Activated naive CD4-positive, alpha-beta T cell treated with anti-CD3 and anti-CD28 coated beads for 36 hours (primary cell): ENCODE measurements at regions of chr1 and their contacts with region 1.

Region 1: GRCh38 chr1:204506961-204507387 is 9.2 kb upstream of the MDM4 start:
- DNase-seq: peak; percentile 95
- H3K4me3 Mint-ChIP-seq: peak overlapping the region; percentile 88
- H3K27ac Mint-ChIP-seq: peak overlapping the region; percentile 99
- H3K4me1 Mint-ChIP-seq: peaks cover 20% of the 10 kb centered on the region
- H3K27me3 Mint-ChIP-seq: peaks cover 4% of the 10 kb centered on the region

Region 2: GRCh38 chr1:203861379-203862184 is 645.4 kb before region 1 on chr1 and contains the start of gene SNRPE:
- CTCF ChIA-PET with region 1: no interaction called
- intact Hi-C with region 1: loop called (anchors 10 kb)
- DNase-seq: peak; percentile 98
- H3K4me3 Mint-ChIP-seq: peak within 1 kb of the TSS; percentile 100
- H3K27ac Mint-ChIP-seq: peak within 1 kb of the TSS; percentile 95
- H3K4me1 Mint-ChIP-seq: peaks cover 25% of the 10 kb centered on the region
- H3K27me3 Mint-ChIP-seq: no peaks in the 10 kb centered on the region
- total RNA-seq, gene SNRPE: 366 to 370 TPM

Region 3: DNA sequence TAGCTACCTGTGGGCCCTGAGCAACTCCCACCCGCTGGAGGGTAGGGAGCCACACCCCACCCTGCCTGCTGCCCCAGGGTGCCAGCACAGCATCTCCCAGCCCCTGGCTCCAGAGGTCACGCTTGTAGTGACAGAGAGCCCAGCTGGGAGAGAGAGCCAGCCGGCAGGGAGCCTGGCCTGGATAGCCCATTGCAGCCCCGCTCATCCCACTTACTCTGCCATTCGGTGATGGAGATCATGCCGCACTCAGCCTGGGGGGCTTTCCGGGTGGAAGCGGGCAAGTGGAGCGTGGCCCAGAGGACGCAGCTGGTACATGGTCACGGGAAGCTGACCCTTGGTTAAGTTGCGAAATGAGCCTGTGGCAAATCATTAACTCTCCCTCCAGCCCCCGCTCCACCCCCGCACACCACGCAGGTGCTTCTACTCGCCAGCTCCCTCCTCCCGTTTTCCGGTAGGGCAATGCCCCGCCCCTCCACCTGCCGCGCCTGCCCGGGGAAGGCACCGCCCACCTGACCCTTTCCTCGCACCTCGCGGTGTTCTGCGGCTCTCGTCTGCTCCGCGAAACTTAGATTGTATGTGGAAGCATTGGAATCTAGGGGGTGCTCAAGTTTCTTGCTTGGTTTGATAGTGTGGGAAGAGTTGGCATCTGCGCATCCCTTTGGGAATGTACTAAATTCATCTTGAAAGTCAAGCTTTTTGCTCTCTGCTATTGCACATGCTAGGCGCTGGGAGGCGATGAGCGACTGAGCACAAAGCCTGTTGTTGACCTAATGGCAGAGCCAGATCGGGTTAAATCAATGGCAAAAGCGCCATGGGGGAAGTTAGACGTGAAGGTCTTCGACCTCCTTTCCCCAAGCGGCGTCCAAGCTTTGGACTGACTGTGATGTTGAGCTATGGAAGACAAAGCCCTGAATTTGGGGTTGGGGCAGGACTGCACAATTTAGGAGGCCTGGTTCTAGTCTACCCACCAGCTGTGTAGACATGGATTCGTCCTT is 293.0 kb before region 1 on chr1 and contains the start of gene GOLT1A:
- CTCF ChIA-PET with region 1: interaction called, 3 read pairs
- intact Hi-C with region 1: loop called (anchors 1 kb)
- DNase-seq: peak; percentile 74
- H3K4me3 Mint-ChIP-seq: peak within 1 kb of the TSS; percentile 20
- H3K27ac Mint-ChIP-seq: no peak within 1 kb of the TSS
- H3K4me1 Mint-ChIP-seq: peaks cover 5% of the 10 kb centered on the region
- H3K27me3 Mint-ChIP-seq: no peaks in the 10 kb centered on the region
- total RNA-seq, gene GOLT1A: not detected

Region 4: GRCh38 chr1:204323887-204324286 is 183.1 kb before region 1 on chr1:
- CTCF ChIA-PET with region 1: no interaction called
- intact Hi-C with region 1: loop called (anchors 5 kb)
- DNase-seq: peak; percentile 88
- H3K4me3 Mint-ChIP-seq: no peak overlapping the region
- H3K27ac Mint-ChIP-seq: peak overlapping the region; percentile 59
- H3K4me1 Mint-ChIP-seq: peaks cover 22% of the 10 kb centered on the region
- H3K27me3 Mint-ChIP-seq: no peaks in the 10 kb centered on the region

Region 5: DNA sequence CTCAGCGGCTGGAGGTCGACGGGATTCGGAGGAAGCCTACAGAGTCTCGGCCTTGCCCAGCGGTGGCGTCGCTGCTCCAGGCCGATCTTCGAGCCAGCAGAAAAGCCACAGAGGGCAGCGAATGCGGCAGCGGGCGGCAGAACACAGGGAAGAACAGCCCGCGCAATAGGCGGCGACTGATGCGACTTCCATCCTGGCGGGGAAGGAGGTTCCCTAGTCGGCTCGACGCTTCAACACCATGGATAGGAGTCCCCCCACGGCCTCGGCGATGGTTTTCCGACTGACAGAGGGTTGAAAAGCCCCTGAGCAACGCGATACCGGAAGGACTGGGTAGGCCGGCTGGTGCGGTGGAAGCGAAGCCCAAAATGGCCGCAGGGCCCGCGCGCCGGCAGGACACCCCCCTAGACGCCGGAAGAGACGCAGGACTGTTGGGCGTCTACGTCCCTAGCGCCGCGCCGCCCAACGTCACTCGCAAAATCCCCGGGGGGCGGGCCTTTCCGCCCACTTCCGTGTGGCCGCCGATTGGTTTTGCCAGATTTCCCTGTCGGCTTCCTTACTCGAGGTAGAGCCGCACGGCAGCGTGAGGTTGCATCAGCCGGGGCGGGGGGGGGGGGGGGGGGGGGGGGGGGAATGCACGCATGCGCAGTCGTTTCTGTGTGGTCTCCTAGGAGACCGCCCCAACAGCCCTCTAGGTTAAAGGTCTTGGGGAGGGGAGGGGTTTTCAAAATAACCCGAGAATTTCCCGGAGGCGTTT is 95.3 kb before region 1 on chr1 and contains the start of gene PPP1R15B:
- CTCF ChIA-PET with region 1: interaction called, 13 read pairs
- intact Hi-C with region 1: loop called (anchors 1 kb)
- DNase-seq: peak; percentile 97
- H3K4me3 Mint-ChIP-seq: peak within 1 kb of the TSS; percentile 99
- H3K27ac Mint-ChIP-seq: peak within 1 kb of the TSS; percentile 99
- H3K4me1 Mint-ChIP-seq: peaks cover 8% of the 10 kb centered on the region
- H3K27me3 Mint-ChIP-seq: no peaks in the 10 kb centered on the region
- total RNA-seq, gene PPP1R15B: 63.7 to 65.6 TPM

Region 6: GRCh38 chr1:204446370-204447111 is 60.4 kb before region 1 on chr1:
- CTCF ChIA-PET with region 1: interaction called, 859 read pairs
- intact Hi-C with region 1: loop called (anchors 1 kb)
- DNase-seq: peak; percentile 88
- H3K4me3 Mint-ChIP-seq: no peak overlapping the region
- H3K27ac Mint-ChIP-seq: peak overlapping the region; percentile 77
- H3K4me1 Mint-ChIP-seq: peaks cover 54% of the 10 kb centered on the region
- H3K27me3 Mint-ChIP-seq: no peaks in the 10 kb centered on the region

Region 7: DNA sequence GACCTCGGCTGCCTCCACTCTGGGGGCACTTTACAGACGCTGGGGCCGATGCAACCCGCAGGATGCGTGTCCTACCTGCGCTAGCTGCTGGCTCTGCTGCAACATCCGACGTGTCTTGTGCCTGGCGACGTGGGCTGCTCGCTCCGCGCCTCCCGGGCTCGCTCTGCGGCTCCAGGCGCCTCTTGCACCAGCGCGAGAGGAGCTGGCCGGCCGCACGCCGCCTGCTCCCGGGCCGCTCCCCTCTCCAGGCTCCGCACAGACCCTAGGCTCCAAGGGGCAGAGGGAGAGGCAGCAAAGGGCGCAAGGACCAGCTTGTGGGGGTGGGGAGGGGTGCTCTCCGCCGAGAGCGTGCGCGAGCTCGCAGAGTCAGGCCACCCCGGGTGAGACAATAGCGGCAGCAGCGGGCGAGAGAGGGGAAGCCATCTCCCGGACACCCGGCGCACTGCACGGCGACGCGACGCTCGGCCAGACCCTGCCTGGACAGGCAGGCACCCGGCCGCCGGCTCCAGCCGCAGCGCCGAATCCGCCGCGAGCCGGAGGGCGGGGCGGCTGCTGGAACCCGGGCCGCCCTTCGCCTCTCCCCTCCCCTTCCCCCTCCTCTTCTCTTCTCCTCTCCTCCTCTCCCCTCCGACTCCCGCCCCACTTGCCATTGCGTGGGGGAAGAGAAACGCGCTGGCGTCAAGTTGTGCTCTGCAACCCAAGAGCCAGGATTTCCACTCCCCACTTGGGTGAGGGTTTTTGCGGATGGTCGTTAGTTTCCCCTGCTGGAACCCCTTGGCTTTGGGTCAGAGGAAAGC is 12.5 kb before region 1 on chr1 and contains the start of gene PIK3C2B:
- CTCF ChIA-PET with region 1: interaction called, 20 read pairs
- intact Hi-C with region 1: loop called (anchors 1 kb)
- DNase-seq: peak; percentile 85
- H3K4me3 Mint-ChIP-seq: peak within 1 kb of the TSS; percentile 90
- H3K27ac Mint-ChIP-seq: peak within 1 kb of the TSS; percentile 94
- H3K4me1 Mint-ChIP-seq: peaks cover 58% of the 10 kb centered on the region
- H3K27me3 Mint-ChIP-seq: no peaks in the 10 kb centered on the region
- total RNA-seq, gene PIK3C2B: 61.0 to 65.4 TPM